Activated CD4-positive, alpha-beta memory T cell treated with anti-CD3 and anti-CD28 coated beads for 36 hours (primary cell): ENCODE measurements at regions of chr18 and their contacts with region 1.

Region 1: DNA sequence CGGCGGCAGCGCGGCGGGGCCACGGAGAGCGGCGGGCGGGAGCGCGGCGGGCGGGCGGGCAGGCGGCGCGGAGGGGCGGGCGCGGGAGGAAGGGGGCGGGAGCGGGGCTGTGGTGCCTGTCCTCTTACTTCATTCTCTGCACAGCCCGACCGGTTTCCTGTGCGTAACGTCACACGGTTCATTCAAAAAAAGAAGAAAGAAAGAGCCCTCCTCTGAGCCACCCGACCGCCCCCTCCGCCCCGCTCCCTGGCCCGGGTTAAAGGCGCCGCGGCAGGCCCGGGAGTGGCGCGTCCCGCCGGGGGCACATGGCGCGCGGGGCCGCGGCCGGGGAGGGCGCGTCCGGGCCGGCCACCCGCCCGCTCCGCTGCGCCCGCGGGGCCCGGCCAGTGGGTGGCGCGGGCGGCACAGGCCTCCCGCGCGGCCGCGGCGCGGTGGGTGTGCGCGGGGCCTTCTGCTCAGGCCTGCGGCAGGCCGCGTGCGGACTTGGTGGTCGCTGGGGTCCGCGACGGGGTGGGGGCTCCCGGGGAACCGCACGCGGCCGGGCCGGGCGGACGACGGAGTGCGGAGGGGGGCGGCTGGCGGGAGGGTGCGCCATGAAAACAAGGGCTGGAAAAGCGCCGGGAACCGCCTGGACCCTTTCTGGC is 599 bp upstream of the BCL2 start:
- DNase-seq: peak; percentile 89
- H3K4me3 Mint-ChIP-seq: peak overlapping the region; percentile 83
- H3K27ac Mint-ChIP-seq: peak overlapping the region; percentile 83
- H3K4me1 Mint-ChIP-seq: peaks cover 26% of the 10 kb centered on the region
- H3K27me3 Mint-ChIP-seq: no peaks in the 10 kb centered on the region

Region 2: DNA sequence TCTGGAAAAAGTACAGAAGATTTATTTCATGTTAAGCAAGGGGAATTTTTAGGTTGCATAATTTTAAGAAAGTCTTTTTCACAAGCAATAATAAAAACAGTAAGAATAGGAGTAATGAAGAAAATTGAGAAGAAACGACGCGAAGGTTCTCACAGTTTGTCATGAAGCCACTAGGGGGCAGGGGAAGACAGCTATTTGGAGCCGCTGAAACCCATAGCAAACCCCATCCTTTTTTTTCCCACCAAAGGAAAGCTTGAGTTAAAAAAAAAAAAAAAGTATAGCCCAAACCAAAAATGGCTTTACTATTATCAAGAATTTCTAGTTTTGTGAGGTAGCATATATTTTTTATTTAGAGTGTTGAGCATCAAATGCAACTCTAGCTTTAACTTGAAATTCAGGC is 303.9 kb before region 1 on chr18:
- CTCF ChIA-PET with region 1: interaction called, 162 read pairs
- POLR2A ChIA-PET with region 1: interaction called, 11 read pairs
- intact Hi-C with region 1: loop called (anchors 1 kb)
- DNase-seq: peak; percentile 63
- H3K4me3 Mint-ChIP-seq: no peak overlapping the region
- H3K27ac Mint-ChIP-seq: no peak overlapping the region
- H3K4me1 Mint-ChIP-seq: no peaks in the 10 kb centered on the region
- H3K27me3 Mint-ChIP-seq: peaks cover 20% of the 10 kb centered on the region

Region 3: DNA sequence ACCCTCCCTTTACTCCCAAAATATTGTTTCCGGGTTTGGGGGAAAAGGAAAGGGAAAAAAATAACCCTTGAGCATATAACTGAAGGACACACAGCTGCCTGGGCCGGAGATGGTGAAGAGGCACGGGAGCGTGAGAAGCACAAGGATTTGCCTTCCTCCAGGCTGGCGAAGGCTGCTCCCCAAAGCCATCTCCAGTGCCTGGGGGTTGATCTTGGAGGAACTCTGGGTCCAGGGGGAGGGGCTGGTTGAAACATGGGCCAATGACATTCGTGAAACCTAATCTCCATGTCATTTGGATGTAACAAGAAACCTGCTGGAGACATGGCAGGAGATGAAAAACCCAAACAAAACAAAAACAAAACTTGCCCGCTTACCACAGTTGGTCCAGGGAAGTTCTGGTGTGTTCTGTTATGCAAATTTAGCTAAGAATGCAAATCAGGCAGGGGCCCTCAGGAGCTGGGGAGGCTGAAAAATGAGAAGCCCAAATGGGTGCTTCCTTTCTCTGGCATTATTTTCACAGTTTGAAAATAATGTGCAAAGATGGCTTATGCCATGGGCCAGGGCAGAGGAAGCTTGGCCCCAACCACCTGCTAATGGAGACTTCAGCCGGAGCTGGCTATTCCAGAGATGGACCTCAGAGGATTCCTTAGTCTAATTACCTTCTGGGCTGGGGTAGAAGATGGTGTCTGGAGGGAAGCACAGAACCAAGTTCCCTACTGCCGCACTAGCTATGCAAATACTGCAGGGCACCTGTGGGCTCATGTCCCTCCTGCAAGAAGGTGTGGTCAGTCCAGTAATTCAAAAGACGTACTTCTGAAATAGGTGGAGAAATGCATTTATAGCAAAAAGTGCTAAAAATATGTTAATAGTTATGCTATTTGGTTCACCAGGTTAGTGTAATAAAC is 181.5 kb before region 1 on chr18:
- CTCF ChIA-PET with region 1: interaction called, 18 read pairs
- POLR2A ChIA-PET with region 1: interaction called, 4 read pairs
- intact Hi-C with region 1: loop called (anchors 1 kb)
- DNase-seq: peak; percentile 55
- H3K4me3 Mint-ChIP-seq: peak overlapping the region; percentile 76
- H3K27ac Mint-ChIP-seq: peak overlapping the region; percentile 89
- H3K4me1 Mint-ChIP-seq: peaks cover 70% of the 10 kb centered on the region
- H3K27me3 Mint-ChIP-seq: no peaks in the 10 kb centered on the region

Region 4: GRCh38 chr18:63199743-63200241 is 120.4 kb before region 1 on chr18:
- CTCF ChIA-PET with region 1: interaction called, 27 read pairs
- POLR2A ChIA-PET with region 1: interaction called, 28 read pairs
- intact Hi-C with region 1: loop called (anchors 1 kb)
- DNase-seq: peak; percentile 59
- H3K4me3 Mint-ChIP-seq: no peak overlapping the region
- H3K27ac Mint-ChIP-seq: no peak overlapping the region
- H3K4me1 Mint-ChIP-seq: peaks cover 41% of the 10 kb centered on the region
- H3K27me3 Mint-ChIP-seq: no peaks in the 10 kb centered on the region

Region 5: DNA sequence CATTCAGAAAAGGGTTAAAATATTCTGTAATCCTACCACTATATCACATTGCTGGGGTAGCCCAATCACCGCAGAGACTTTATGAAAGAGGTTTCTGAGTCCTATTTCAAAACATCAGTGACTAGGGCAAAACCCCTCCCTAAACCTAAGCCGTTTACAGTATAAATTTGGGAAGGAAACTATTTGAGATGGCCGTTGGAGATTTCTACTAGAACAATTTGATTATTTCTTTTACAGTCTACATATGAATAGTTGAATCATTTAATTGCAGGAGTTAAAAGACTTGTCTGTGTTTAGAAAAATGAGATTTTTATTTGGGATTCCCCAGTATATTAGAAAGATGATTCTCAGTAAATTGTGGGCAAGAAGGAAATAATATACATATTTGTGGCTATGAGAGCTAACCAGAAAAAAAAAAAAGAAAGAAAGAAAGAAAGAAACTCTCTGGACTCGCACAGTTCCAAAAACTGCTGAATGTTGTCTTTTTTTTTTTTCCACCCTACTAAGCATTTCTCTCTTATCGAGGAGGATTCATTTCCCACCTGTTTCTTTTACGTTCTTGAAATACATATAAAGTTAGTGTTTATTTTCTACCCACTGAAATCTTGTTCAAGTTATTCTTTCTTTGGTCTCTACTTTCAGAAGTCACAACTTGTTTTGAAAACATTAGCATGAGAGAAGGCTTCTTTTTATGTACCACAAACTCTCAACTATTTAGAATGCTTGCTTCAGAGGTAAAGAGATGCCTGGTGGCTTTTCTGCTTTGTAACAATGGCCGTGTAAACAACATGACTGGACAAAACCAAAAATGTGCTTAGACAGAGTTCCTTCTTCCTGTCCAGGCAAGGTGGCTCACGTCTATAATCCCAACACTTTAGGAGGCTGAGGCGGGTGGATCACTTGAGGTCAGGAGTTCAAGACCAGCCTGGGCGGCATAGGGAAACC is 66.5 kb before region 1 on chr18:
- CTCF ChIA-PET with region 1: interaction called, 3 read pairs
- POLR2A ChIA-PET with region 1: no interaction called
- intact Hi-C with region 1: loop called (anchors 2 kb)
- DNase-seq: no peak
- H3K4me3 Mint-ChIP-seq: no peak overlapping the region
- H3K27ac Mint-ChIP-seq: peak overlapping the region; percentile 62
- H3K4me1 Mint-ChIP-seq: peaks cover 74% of the 10 kb centered on the region
- H3K27me3 Mint-ChIP-seq: no peaks in the 10 kb centered on the region

Region 6: GRCh38 chr18:63299837-63300745 is 20.1 kb before region 1 on chr18:
- CTCF ChIA-PET with region 1: interaction called, 54 read pairs
- POLR2A ChIA-PET with region 1: interaction called, 12 read pairs
- intact Hi-C with region 1: loop called (anchors 1 kb)
- DNase-seq: peak; percentile 76
- H3K4me3 Mint-ChIP-seq: peak overlapping the region; percentile 45
- H3K27ac Mint-ChIP-seq: peak overlapping the region; percentile 93
- H3K4me1 Mint-ChIP-seq: peaks cover 86% of the 10 kb centered on the region
- H3K27me3 Mint-ChIP-seq: no peaks in the 10 kb centered on the region